ENCODE measurements at regions of chr16 and their contacts with region 1.

Region 1: GRCh38 chr16:684067-684794 is at the start of gene JMJD8:
- DNase-seq: peak; percentile 96
- ATAC-seq: peak; percentile 65
- H3K4me3 Mint-ChIP-seq: peak within 1 kb of the TSS; percentile 76
- H3K27ac Mint-ChIP-seq: peak within 1 kb of the TSS; percentile 77
- H3K4me1 Mint-ChIP-seq: peaks cover 20% of the 10 kb centered on the region
- H3K27me3 Mint-ChIP-seq: no peaks in the 10 kb centered on the region
- total RNA-seq, gene JMJD8: 34.0 to 38.3 TPM

Region 2: DNA sequence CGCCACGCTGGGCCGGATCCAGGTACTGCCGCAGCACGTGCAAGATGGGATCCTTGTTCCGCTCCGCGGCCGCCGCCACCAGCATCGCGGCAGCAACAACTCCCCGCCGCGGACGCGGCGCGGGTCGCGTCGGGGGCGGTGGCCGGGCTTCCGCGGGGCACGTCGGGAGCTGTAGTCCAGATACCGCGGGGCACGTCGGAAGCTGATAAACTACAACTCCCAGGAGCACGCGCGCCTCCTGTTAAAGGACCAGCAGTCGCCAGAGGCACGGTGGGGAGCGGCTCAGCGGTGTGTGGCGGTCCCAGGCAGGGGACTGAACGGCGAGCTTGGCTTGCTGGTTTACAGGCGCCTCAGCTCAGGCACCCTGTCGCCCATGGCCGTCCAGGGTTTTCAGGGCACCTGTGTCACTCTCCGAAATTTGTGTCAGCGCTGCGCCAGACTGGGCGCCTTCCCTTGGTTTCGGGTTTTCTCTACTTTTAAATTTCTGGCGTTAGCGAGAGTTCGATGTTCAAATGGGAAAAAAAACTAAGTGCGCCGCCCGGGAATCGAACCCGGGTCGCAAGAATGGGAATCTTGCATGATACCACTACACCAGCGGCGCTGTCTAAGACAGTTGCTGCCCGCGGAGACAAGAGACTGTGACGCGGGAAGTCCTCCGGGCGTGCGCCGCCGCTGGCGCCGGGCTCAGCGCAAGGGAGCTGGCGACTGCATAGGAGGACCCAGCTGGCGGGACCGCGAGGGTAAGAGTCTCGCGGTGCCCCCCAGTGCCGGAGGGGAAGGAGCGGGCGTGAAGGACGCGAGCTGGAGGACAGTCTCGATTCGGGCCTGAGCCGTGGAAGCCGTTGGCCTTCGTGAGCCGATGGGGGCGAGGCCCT is 47.8 kb before region 1 on chr16 and contains the start of gene METTL26:
- POLR2A ChIA-PET with region 1: interaction called, 10 read pairs
- DNase-seq: peak; percentile 96
- ATAC-seq: peak; percentile 76
- H3K4me3 Mint-ChIP-seq: peak within 1 kb of the TSS; percentile 94
- H3K27ac Mint-ChIP-seq: peak within 1 kb of the TSS; percentile 94
- H3K4me1 Mint-ChIP-seq: peaks cover 6% of the 10 kb centered on the region
- H3K27me3 Mint-ChIP-seq: no peaks in the 10 kb centered on the region
- total RNA-seq, gene METTL26: 75.7 to 81.2 TPM

Region 3: GRCh38 chr16:667780-668518 is 16.3 kb before region 1 on chr16 and contains the start of gene RHOT2:
- POLR2A ChIA-PET with region 1: interaction called, 18 read pairs
- DNase-seq: peak; percentile 97
- ATAC-seq: peak; percentile 92
- H3K4me3 Mint-ChIP-seq: peak within 1 kb of the TSS; percentile 78
- H3K27ac Mint-ChIP-seq: peak within 1 kb of the TSS; percentile 84
- H3K4me1 Mint-ChIP-seq: peaks cover 4% of the 10 kb centered on the region
- H3K27me3 Mint-ChIP-seq: no peaks in the 10 kb centered on the region
- total RNA-seq, gene RHOT2: 173 to 183 TPM

Region 4: GRCh38 chr16:695355-696089 is 11.3 kb after region 1 on chr16:
- POLR2A ChIA-PET with region 1: interaction called, 37 read pairs
- DNase-seq: peak; percentile 82
- ATAC-seq: peak; percentile 70
- H3K4me3 Mint-ChIP-seq: peak overlapping the region; percentile 77
- H3K27ac Mint-ChIP-seq: peak overlapping the region; percentile 74
- H3K4me1 Mint-ChIP-seq: peaks cover 6% of the 10 kb centered on the region
- H3K27me3 Mint-ChIP-seq: peaks cover 15% of the 10 kb centered on the region

Region 5: DNA sequence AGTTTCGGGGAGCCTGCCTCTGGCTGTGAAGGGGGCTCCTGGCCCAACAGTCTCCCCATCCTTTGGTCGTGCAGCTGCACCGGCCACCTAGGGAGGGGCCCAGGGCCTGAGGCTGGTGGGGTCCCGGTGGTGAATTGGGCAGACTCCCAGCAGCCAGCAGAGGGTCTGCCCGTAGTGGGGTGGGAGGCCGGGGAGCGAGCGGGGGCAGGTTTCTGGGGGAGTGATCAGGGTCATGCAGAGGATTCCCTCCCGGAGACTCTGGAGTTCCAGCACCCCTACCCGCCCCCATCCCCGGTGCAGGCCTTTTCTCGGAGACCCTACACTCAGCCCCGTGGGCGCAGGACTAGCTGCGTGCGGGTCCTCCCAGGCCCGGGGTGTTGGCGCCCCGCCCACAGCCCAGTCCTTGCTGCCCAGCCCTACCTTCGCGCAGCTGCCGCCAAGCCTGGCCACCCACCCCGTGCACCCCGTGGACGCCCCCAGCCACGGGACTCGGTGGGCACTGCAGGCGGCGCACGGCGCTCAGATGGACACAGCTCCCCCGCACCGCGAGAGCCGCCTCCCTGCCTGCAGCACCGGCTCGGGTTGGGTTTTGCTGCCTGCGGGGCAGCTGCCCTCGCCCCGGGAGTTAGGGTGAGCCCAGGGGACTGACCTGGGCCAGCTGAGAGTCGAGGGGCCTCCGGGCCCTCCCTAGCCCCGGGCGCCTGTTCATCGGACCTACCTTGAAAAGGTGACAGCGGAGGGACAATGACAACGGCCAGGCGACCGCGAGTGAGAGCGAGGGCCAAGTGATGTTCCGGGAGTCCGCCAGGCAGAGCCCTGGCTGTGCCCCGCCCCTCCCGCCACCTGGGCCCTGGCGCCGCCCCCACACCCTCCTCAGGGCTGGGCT is 116.0 kb after region 1 on chr16 and contains the start of gene GNG13:
- POLR2A ChIA-PET with region 1: no interaction called
- DNase-seq: no peak
- ATAC-seq: peak; percentile 5
- H3K4me3 Mint-ChIP-seq: no peak within 1 kb of the TSS
- H3K27ac Mint-ChIP-seq: no peak within 1 kb of the TSS
- H3K4me1 Mint-ChIP-seq: no peaks in the 10 kb centered on the region
- H3K27me3 Mint-ChIP-seq: peaks cover 6% of the 10 kb centered on the region
- total RNA-seq, gene GNG13: not detected